Endothelial cell of umbilical vein (primary cell): ENCODE measurements at regions of chr6 and their contacts with region 1.

Region 1: GRCh38 chr6:12957321-12958051 is 240.9 kb downstream of the PHACTR1 start:
- DNase-seq: peak; percentile 76
- H3K4me3 ChIP-seq: peak overlapping the region; percentile 18 to 85 (median 50)
- H3K27ac ChIP-seq: peak overlapping the region; percentile 56
- H3K4me1 ChIP-seq: peaks cover 14% of the 10 kb centered on the region
- H3K27me3 ChIP-seq: no peaks in the 10 kb centered on the region
- CTCF ChIP-seq: peak in 1 of 2 donors; percentile 3
- POLR2A ChIP-seq: no peak

Region 2: DNA sequence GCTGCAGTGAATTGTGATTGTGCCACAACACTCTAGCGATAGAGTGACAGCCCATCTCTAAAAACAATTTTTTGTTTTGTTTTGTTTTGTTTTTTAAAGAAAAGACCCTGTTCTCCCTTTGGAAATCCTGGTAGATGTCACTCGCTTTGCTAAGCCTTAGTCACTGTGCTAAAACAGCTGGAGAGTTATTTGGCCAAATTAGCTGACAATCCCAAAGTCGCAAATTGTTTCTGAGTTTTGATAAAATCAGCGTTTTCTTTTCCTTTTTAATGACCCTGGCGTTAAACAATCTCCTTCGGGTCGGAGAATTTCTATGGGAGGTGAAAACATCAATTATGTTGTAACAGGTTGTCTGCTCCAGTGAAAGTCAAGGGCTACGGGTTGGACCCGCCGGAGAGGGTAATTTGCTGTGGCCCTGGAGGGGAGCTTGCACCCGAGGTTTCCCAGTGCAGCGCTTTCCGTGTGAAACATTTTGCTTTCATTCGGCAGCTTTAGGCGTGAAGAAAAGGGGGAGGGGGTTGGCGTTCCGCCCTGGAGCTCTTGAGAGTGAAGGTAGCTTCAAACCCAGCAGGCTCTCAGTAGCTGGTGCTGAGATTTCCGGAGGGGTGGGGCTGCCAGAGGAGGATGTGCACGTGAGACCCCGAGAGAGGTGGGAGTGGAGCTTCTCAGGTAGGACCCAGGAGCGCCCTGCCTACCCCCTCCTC is 55.6 kb after region 1 on chr6:
- CTCF ChIA-PET with region 1: interaction called, 6 read pairs
- POLR2A ChIA-PET with region 1: no interaction called
- dilution Hi-C with region 1: no loop called
- intact Hi-C with region 1: loop called (anchors 1 kb)
- DNase-seq: peak; percentile 18
- H3K4me3 ChIP-seq: peak overlapping the region; percentile 1 to 35 (median 29)
- H3K27ac ChIP-seq: no peak overlapping the region
- H3K4me1 ChIP-seq: peaks cover 4% of the 10 kb centered on the region
- H3K27me3 ChIP-seq: peaks cover 0 to 3% of the 10 kb centered on the region in 2 experiments
- CTCF ChIP-seq: no peak
- POLR2A ChIP-seq: no peak

Region 3: DNA sequence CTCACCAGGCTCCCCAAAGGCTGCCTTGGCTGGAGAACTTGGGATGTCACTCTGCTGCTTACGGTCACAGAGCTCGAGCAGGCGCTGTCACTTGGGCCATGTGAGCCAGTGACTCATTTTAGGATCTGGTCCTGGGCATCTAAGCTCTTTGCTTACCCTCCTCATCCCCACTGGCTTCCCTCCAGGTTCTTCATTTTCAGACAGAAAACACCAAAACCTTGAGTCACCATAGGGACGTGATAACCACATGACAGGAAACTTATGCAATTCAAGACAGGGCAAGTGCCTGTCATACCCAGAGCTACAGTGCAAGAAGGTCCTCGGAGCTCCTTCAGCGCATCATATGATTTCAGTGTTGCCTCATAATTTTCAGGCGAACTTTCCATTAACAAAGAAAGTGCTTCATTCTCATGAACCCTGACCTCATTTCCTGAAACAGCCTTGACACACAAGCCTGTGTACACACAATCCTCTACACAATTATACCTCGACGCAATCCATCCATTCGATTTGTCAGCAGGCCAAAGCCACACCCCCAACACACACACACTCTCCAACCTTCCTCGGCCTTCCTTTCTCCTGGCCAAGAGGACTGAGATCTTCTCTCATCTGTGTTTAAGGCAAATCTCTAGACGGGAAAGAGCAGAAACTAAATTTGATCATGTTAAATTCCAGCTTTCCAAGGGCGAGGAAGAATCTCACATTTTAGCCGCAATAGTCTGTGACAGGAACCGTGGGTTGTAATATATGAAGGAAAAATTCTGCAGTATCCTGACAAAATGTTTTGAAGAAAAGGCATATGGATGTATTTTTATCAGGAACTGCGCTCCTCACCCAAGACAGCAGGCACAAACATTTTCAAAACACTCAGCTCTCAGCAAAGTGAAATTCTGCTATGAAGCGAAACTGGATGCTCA is 345.5 kb after region 1 on chr6:
- CTCF ChIA-PET with region 1: interaction called, 3 read pairs
- POLR2A ChIA-PET with region 1: interaction called, 3 read pairs
- dilution Hi-C with region 1: no loop called
- intact Hi-C with region 1: loop called (anchors 2 kb)
- DNase-seq: peak; percentile 93
- H3K4me3 ChIP-seq: peak overlapping the region in 1 of 3 experiments; percentile 15
- H3K27ac ChIP-seq: peak overlapping the region; percentile 86
- H3K4me1 ChIP-seq: peaks cover 36% of the 10 kb centered on the region
- H3K27me3 ChIP-seq: no peaks in the 10 kb centered on the region
- CTCF ChIP-seq: no peak
- POLR2A ChIP-seq: no peak